ENCODE measurements at regions of chr5 and their contacts with region 1.

Region 1: GRCh38 chr5:76771705-76772405 is 47.0 kb upstream of the F2RL1 start:
- DNase-seq: peak in 1 of 2 donors; percentile 52
- H3K4me3 ChIP-seq: no peak overlapping the region
- CTCF ChIP-seq: no peak
- POLR2A ChIP-seq: no peak

Region 2: DNA sequence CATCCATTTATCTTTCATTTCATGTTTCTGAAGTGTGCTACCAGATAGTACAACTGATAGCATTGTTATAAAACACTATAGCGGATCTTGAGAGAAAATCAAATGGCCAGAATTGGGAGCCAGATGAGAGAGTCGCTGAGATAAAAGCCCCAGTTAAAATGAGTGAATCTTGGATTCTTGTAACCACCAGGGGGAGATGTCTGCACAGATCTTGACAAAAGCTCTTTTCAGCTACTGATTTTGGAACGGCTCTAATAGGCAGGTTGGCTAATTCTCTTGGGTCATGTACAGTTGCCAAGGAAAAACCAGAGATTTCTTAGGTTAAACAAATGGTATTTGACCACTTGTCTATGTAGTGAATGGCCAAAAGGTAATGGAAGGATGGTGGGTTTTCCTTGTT is 170.4 kb before region 1 on chr5:
- intact Hi-C with region 1: loop called (anchors 5 kb)
- DNase-seq: peak in 1 of 2 donors; percentile 20
- H3K4me3 ChIP-seq: no peak overlapping the region
- CTCF ChIP-seq: peak in 1 of 3 donors; percentile 27
- POLR2A ChIP-seq: no peak

Measured in lower leg skin (tissue), 4 donors.